ENCODE measurements at regions of chr3 and their contacts with region 1.

Region 1: DNA sequence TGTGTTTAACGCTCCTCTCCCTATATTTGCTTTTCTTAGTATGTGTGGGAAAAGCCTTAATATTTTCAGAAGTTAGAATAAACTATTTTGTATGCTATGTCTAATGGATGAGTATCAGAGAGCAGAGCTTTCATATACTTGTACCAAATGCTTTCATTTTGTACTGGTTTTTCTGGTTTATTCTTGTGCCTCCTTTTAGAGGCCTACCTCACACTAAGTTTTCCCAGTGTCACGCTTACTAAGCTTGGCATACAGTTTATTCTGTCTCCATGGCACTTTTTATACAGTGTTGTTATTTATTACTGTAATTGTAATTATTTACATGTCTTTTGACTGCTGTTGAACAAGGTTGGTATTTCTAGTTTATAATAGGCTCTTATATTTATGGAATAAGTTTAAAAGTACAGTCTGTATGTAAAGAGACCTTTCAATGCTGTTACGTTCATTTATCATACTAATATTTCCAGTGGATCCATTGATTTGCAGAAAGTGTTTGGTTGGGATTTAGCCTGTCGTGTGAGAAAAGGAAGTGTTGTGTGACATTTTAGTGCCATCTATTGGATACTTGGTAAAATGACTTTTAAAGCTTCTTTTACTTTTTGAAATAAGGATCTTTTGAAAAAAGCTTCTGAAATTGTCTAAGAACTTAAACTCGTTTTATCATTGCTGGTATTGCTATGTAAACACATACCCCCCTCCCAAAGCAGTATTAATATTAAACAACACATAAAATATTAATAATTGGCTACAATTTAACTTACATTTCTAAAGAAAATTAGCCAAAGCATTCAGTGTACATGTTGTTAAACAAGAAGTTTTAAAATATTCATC is 5.2 kb upstream of the EBLN2 start:
- DNase-seq: peak in 3 of 14 experiments; percentile 40 to 68 (median 44)
- ATAC-seq: peak; percentile 48
- H3K4me3 ChIP-seq: no peak overlapping the region
- H3K4me3 Mint-ChIP-seq: no peak overlapping the region
- H3K27ac ChIP-seq: no peak overlapping the region
- H3K27ac Mint-ChIP-seq: peak overlapping the region; percentile 18
- H3K4me1 ChIP-seq: no peaks in the 10 kb centered on the region
- H3K4me1 Mint-ChIP-seq: peaks cover 28% of the 10 kb centered on the region
- H3K27me3 ChIP-seq: no peaks in the 10 kb centered on the region
- H3K27me3 Mint-ChIP-seq: no peaks in the 10 kb centered on the region
- CTCF ChIP-seq: peak; percentile 79

Region 2: DNA sequence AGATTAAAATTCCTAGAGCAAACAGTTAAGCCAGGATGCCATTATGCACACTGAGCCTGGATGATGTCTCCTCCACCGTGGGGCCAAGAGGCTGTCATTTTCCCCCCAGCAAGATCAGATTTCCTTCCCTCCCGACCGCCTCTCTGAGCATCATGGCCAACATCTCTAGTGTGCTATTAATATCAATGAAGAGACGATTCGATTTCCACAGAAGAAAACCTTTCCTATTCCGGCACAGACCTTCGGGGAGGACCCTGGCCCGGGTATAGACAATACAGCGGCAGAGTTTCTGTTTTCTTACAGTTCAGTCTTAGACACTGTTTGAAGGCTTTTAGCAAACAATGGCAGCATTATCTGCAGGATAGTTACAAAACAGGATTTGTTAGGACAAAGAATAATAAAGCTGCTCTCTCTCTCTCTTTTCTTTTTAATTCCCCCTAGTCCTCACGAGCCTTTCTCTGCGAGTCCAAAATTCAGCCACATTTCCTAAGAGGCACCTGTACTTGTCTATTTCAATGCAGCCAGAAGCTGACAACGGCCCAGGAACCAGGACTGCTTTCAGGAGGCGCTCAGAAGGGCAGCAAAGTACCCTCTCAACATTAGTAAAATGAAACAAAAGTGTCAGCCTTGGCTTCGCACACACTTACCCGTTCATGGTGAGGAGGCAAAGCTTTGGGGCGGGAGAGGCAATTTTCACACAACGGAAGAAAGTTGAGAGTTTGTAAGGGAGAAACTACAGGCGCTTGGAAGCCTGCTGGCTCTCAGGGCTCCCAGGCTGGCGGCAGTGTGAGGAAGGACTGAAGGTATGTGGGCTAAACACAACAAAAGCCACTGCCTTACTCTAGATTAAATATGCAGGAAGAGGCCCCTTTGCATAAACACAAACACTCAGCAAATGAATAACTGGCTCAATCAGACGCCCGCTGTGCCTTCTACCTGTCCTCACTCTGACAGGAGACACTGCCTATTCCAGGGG is 1750.7 kb before region 1 on chr3:
- CTCF ChIA-PET with region 1: no interaction called
- POLR2A ChIA-PET with region 1: no interaction called
- intact Hi-C with region 1: no loop called
- DNase-seq: peak in 9 of 14 experiments; percentile 12 to 50 (median 19)
- ATAC-seq: peak; percentile 44
- H3K4me3 ChIP-seq: peak overlapping the region; percentile 60
- H3K4me3 Mint-ChIP-seq: peak overlapping the region; percentile 87
- H3K27ac ChIP-seq: peak overlapping the region; percentile 6 to 69
- H3K27ac Mint-ChIP-seq: peak overlapping the region; percentile 93
- H3K4me1 ChIP-seq: peaks cover 24% of the 10 kb centered on the region
- H3K4me1 Mint-ChIP-seq: peaks cover 96% of the 10 kb centered on the region
- H3K27me3 ChIP-seq: no peaks in the 10 kb centered on the region
- H3K27me3 Mint-ChIP-seq: no peaks in the 10 kb centered on the region
- CTCF ChIP-seq: no peak

Region 3: GRCh38 chr3:71875461-71875947 is 1180.7 kb before region 1 on chr3:
- CTCF ChIA-PET with region 1: no interaction called
- POLR2A ChIA-PET with region 1: no interaction called
- intact Hi-C with region 1: loop called in 1 of 2 experiments (anchors 1 kb)
- DNase-seq: peak; percentile 63 to 84 (median 74)
- ATAC-seq: peak; percentile 99
- H3K4me3 ChIP-seq: no peak overlapping the region
- H3K4me3 Mint-ChIP-seq: no peak overlapping the region
- H3K27ac ChIP-seq: no peak overlapping the region
- H3K27ac Mint-ChIP-seq: no peak overlapping the region
- H3K4me1 ChIP-seq: peaks cover 12% of the 10 kb centered on the region
- H3K4me1 Mint-ChIP-seq: peaks cover 21% of the 10 kb centered on the region
- H3K27me3 ChIP-seq: no peaks in the 10 kb centered on the region
- H3K27me3 Mint-ChIP-seq: no peaks in the 10 kb centered on the region
- CTCF ChIP-seq: peak; percentile 78

Region 4: GRCh38 chr3:72938471-72939265 is 117.6 kb before region 1 on chr3:
- CTCF ChIA-PET with region 1: interaction called, 34 read pairs
- POLR2A ChIA-PET with region 1: interaction called, 8 read pairs
- intact Hi-C with region 1: loop called (anchors 1 kb)
- DNase-seq: peak in 5 of 14 experiments; percentile 25 to 75 (median 65)
- ATAC-seq: peak; percentile 100
- H3K4me3 ChIP-seq: no peak overlapping the region
- H3K4me3 Mint-ChIP-seq: no peak overlapping the region
- H3K27ac ChIP-seq: no peak overlapping the region
- H3K27ac Mint-ChIP-seq: no peak overlapping the region
- H3K4me1 ChIP-seq: no peaks in the 10 kb centered on the region
- H3K4me1 Mint-ChIP-seq: no peaks in the 10 kb centered on the region
- H3K27me3 ChIP-seq: no peaks in the 10 kb centered on the region
- H3K27me3 Mint-ChIP-seq: no peaks in the 10 kb centered on the region
- CTCF ChIP-seq: peak; percentile 77

Region 5: DNA sequence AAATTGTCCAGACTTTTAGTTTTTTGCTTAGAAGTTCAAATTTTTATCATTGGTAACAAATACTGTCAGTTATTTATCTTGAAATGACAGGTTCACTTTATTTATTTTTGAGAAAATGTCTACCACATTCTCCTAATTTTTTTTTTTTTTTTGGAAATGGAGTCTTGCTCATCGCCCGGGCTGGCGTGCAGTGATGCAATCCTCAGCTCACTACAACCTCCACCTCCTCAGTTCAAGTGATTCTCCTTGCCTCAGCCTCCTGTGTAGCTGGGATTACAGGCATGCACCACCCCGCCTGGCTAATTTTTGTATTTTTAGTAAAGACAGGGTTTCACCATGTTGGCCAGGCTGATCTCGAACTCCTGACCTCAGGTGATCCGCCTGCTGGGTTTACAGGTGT is 10.8 kb before region 1 on chr3:
- CTCF ChIA-PET with region 1: interaction called, 12 read pairs
- POLR2A ChIA-PET with region 1: no interaction called
- intact Hi-C with region 1: no loop called
- DNase-seq: no peak
- ATAC-seq: no peak
- H3K4me3 ChIP-seq: no peak overlapping the region
- H3K4me3 Mint-ChIP-seq: no peak overlapping the region
- H3K27ac ChIP-seq: no peak overlapping the region
- H3K27ac Mint-ChIP-seq: peak overlapping the region; percentile 40
- H3K4me1 ChIP-seq: peaks cover 16% of the 10 kb centered on the region
- H3K4me1 Mint-ChIP-seq: peaks cover 55% of the 10 kb centered on the region
- H3K27me3 ChIP-seq: no peaks in the 10 kb centered on the region
- H3K27me3 Mint-ChIP-seq: no peaks in the 10 kb centered on the region
- CTCF ChIP-seq: no peak

Measured in CD4-positive, alpha-beta T cell (primary cell).